ENCODE measurements at regions of chr3 and their contacts with region 1.

Region 1: GRCh38 chr3:12556671-12557472 is at the start of gene MKRN2:
- DNase-seq: peak; percentile 84 to 93
- ATAC-seq: peak; percentile 95 to 99 (median 96)
- H3K4me3 ChIP-seq: peak within 1 kb of the TSS; percentile 70
- H3K4me3 Mint-ChIP-seq: peak within 1 kb of the TSS; percentile 90
- H3K27ac ChIP-seq: peak within 1 kb of the TSS; percentile 92
- H3K27ac Mint-ChIP-seq: peak within 1 kb of the TSS; percentile 71 to 90
- H3K4me1 ChIP-seq: peaks cover 20% of the 10 kb centered on the region
- H3K4me1 Mint-ChIP-seq: peaks cover 63 to 64% of the 10 kb centered on the region in 2 donors
- H3K27me3 ChIP-seq: peaks cover 18% of the 10 kb centered on the region
- H3K27me3 Mint-ChIP-seq: peaks cover 22 to 25% of the 10 kb centered on the region in 2 donors
- CTCF ChIP-seq: no peak
- total RNA-seq, gene MKRN2: 23.9 to 31.7 (median 29.4) TPM

Region 2: DNA sequence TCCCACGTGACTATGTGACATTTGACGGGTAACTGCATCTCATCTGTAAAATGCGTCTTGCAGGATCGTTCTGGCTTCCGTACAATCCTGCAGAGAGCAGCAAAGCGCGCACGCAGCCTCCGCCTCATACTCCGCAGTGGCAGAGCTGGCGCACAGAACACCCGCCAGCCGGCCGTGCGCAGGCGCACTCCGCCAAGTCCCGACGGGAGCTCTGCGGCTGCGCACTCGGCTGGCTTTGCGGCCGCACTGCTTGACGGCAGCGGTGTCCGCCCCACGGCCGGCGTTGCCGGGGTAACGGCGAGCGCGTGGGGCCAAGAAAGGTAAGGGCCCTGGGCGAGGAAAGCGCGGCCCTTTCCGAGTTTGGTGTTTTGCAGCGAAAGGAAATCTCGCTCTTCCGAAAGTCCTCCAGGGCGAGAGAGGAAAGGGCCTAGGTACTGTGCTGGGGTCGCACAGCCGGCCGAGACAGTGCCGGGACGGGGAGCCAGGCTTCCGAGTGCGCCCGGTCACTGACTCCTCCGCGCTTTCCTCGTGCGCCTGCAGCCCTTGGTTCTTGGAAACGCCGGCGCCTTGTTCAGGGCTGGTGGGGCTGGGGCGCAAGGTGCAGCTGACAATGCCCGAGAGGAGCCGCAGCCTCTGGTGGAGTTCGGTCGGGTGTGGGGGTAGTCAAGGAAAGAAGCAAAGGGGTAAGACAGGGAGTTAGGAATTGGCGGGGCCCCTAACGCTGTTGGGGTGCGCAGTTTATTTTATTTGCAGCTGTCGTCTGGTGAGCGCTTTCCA is 72.5 kb before region 1 on chr3 and contains the start of gene TSEN2:
- intact Hi-C with region 1: loop called (anchors 1 kb)
- DNase-seq: peak; percentile 97 to 99
- ATAC-seq: peak; percentile 91 to 96 (median 92)
- H3K4me3 ChIP-seq: peak within 1 kb of the TSS; percentile 85
- H3K4me3 Mint-ChIP-seq: peak within 1 kb of the TSS; percentile 94
- H3K27ac ChIP-seq: peak within 1 kb of the TSS; percentile 78
- H3K27ac Mint-ChIP-seq: peak within 1 kb of the TSS; percentile 93 to 94
- H3K4me1 ChIP-seq: peaks cover 18% of the 10 kb centered on the region
- H3K4me1 Mint-ChIP-seq: peaks cover 29 to 31% of the 10 kb centered on the region in 2 donors
- H3K27me3 ChIP-seq: no peaks in the 10 kb centered on the region
- H3K27me3 Mint-ChIP-seq: no peaks in the 10 kb centered on the region
- CTCF ChIP-seq: no peak
- total RNA-seq, gene TSEN2: 4.1 to 11.4 (median 5.7) TPM